Right ventricle myocardium inferior (tissue), 1 donor: ENCODE measurements at regions of chr9 and their contacts with region 1.

Region 1: DNA sequence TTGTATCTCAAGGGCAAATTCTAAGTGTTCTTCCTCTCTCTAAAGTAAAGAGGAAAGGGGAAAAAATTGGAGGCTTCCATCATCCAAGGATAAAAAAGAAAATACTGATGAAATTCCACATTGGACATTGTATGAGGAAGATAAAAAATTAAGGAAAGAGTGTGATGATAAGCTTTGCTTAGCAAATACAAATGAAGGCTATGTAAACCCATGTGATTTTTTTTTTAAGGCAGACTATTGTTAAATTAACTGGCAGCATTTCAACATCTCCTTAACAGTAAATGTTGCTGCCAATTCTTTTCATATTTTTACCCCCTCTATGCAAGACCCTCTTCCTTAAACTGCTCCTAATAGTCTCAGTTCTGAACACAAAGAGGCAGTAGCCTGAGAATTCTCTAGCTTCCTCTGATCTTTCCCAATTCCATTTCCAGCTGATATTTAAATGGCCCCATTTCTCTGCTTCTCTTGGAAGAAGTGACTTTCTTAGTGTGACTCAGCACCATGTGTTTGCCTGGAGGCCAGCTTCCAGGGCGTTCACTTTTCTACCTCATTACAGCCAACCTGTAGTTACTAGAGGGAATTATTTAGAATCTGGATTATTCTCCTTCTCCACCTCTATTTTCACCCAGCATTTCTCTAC is 159.7 kb downstream of the TLE1 start:
- DNase-seq: no peak
- ATAC-seq: peak; percentile 44

Region 2: DNA sequence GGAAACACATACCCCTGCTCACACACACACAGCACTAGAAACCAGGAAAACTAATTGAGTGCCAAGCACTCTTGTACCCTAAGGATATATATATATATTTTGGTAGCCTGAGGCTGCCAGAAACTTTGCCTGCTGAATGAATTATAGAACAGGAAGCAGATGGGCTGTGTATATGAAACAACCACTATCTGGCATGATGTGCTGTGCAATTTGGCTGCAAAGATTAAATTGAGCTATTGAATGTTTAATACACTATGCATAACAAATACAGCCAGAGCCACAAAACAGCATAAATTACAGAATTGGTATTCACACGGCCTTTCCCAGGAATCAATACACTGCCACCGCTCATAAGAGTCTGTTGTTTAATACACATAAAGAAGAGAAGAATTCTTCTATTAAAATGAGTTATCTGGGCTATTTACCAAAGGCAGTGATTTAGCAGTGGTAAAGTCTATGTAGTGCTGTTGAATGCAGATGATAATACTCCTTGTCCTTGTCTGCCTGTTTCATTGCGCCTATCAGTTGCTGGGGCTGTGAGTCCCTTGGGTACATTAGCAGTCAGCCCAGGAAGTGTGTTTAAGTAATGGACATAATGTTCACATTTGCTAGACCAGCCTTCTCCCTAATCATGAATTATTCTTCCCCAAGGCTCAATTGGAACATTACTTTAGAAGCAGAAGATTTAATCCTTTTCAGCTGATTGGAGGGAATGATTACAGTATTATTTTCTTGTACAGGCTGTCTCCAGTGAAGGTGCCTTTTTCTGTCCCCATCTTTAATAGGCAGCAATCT is 134.6 kb before region 1 on chr9:
- intact Hi-C with region 1: loop called (anchors 10 kb)
- DNase-seq: no peak
- ATAC-seq: peak; percentile 61

Region 3: GRCh38 chr9:81724242-81724889 is 194.7 kb after region 1 on chr9:
- intact Hi-C with region 1: no loop called
- DNase-seq: no peak
- ATAC-seq: no peak

Region 4: DNA sequence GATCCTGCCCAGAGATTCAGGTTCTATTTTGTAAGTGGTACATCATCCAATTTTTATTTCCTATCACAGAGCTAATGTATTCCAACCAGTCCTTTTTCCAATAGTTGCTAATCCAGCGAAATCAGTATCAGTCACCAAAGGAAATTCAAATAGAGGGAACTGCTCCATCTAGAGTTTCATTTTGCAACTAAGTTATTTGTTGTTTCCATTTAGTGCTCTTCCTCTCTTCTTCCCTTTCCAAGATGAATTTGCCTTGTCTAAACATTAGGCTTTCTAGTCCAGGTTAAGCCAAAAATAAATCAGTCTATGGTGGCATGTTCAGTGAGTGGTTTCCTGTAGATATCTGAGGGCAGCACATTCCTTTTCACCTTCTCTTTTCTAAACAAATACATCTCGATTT is 318.8 kb after region 1 on chr9:
- intact Hi-C with region 1: loop called (anchors 10 kb)
- DNase-seq: no peak
- ATAC-seq: no peak